Right cardiac atrium (tissue), 5 donors: ENCODE measurements at regions of chr3 and their contacts with region 1.

Region 1: DNA sequence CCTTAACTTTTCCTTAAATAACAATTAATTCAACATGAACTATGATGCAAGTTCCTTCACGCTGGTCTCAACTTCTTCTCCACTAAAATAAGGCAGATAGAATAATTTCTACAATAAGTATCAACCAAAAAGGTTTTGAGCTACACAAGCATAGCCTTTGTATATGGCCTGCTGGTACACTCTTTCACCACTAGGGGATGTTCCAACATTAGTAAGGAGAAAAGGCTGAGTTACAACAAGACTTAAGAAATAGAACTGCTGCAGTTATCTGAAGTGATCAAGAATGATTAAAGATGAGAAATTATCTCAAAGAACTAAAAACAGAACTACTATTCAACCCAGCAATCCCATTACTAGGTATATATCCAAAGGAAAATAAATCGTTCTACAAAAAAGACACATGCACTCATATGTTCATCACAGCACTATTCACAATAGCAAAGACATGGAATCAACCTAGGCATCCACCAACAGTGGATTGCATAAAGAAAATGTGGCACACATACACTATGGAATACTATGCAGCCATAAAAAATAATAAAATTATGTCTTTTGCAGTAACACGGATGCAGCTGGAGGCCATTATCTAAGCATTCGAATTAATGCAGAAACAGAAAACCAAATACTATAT is 14.4 kb downstream of the ATP13A3 start:
- DNase-seq: no peak
- ATAC-seq: peak; percentile 60 to 69
- H3K4me3 ChIP-seq: no peak overlapping the region
- H3K27ac ChIP-seq: no peak overlapping the region
- H3K4me1 ChIP-seq: peaks cover 10% of the 10 kb centered on the region
- H3K27me3 ChIP-seq: no peaks in the 10 kb centered on the region

Region 2: GRCh38 chr3:194166682-194167479 is 305.5 kb before region 1 on chr3:
- intact Hi-C with region 1: no loop called
- DNase-seq: peak; percentile 64 to 85 (median 78)
- ATAC-seq: peak; percentile 76 to 92
- H3K4me3 ChIP-seq: no peak overlapping the region
- H3K27ac ChIP-seq: no peak overlapping the region
- H3K4me1 ChIP-seq: peaks cover 4% of the 10 kb centered on the region
- H3K27me3 ChIP-seq: no peaks in the 10 kb centered on the region

Region 3: DNA sequence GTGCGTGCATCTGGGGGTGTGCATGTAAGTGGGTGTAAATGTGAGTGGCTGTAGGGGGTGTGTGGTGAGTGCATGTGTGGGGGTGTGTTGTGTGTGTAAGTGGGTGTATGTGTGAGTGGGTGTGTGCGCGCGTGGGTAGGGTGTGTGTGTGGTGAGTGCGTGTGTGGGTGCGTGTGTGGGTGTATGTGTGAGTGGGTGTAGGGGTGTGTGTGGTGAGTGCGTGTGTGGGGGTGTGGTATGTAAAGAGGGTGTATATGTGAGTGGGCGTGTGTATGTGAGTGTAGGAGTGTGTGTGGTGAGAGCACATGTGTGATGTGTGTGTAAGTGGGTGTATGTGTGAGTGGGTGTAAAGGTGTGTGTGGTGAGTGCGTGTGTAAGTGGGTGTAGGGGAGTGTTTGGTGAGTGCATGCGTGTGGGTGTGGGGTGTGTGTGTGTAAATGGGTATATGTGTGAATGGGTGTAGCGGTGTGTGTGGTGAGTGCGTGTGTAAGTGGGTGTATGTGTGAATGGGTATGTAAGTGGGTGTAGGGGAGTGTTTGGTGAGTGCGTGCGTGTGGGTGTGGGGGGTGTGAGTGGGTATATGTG is 120.4 kb before region 1 on chr3:
- intact Hi-C with region 1: no loop called
- DNase-seq: no peak
- ATAC-seq: peak; percentile 14 to 34
- H3K4me3 ChIP-seq: no peak overlapping the region
- H3K27ac ChIP-seq: no peak overlapping the region
- H3K4me1 ChIP-seq: no peaks in the 10 kb centered on the region
- H3K27me3 ChIP-seq: no peaks in the 10 kb centered on the region

Region 4: GRCh38 chr3:194573691-194574437 is 101.5 kb after region 1 on chr3:
- intact Hi-C with region 1: loop called in 3 of 4 experiments (anchors 5 kb)
- DNase-seq: peak; percentile 46 to 72 (median 67)
- ATAC-seq: peak; percentile 48 to 52
- H3K4me3 ChIP-seq: no peak overlapping the region
- H3K27ac ChIP-seq: no peak overlapping the region
- H3K4me1 ChIP-seq: peaks cover 18% of the 10 kb centered on the region
- H3K27me3 ChIP-seq: no peaks in the 10 kb centered on the region

Region 5: GRCh38 chr3:194592798-194593752 is 120.7 kb after region 1 on chr3:
- intact Hi-C with region 1: loop called in 3 of 4 experiments (anchors 2 to 5 kb)
- DNase-seq: no peak
- ATAC-seq: peak in 1 of 2 donors; percentile 17
- H3K4me3 ChIP-seq: no peak overlapping the region
- H3K27ac ChIP-seq: no peak overlapping the region
- H3K4me1 ChIP-seq: no peaks in the 10 kb centered on the region
- H3K27me3 ChIP-seq: no peaks in the 10 kb centered on the region

Region 6: DNA sequence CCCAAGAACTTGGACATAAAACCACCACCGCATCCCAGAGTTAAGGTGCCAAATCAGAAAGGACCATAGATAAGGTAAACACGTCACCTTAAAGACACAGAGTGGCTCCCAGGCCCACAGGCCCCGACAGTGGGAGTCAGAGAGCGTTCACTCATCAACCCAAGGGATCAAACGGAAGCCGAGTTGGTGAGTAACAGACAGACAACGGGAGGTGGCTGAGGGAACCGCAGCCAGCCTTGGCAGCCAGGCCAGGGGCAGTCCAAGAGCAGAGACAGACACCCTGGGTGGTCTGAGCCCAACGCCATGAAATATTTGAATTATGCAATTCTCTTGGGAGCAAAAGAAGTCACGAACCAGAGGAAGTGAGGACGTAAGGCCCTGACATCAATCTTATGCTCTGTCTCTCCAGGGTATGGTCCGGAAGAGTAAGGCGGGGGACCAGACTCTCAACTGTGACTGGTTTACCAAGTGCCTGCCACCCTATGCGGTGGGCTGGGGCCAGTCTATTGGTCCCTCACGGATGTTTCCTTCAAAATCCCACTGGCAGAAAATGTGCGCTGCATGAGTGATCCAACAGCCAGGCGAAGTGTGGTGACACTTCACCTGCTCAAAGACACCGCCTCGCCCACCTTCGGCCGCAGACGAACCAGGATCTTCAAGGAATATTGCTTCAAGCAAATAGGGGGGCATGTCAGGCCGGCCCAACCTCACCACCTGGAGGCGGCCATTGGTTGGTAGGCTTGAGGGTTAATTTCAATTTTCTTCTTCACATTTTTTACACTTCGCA is 126.6 kb after region 1 on chr3:
- intact Hi-C with region 1: loop called in 3 of 4 experiments (anchors 2 to 5 kb)
- DNase-seq: peak in 1 of 3 donors; percentile 74
- ATAC-seq: peak in 1 of 2 donors; percentile 73
- H3K4me3 ChIP-seq: no peak overlapping the region
- H3K27ac ChIP-seq: no peak overlapping the region
- H3K4me1 ChIP-seq: no peaks in the 10 kb centered on the region
- H3K27me3 ChIP-seq: no peaks in the 10 kb centered on the region